Dendritic cell treated with granulocyte-macrophage colony-stimulating factor and Interleukin-4, amounts not matched to agents 40 ng/mL and 50 ng/mL, for 4 days (primary cell): ENCODE measurements at regions of chr10 and their contacts with region 1.

Region 1: DNA sequence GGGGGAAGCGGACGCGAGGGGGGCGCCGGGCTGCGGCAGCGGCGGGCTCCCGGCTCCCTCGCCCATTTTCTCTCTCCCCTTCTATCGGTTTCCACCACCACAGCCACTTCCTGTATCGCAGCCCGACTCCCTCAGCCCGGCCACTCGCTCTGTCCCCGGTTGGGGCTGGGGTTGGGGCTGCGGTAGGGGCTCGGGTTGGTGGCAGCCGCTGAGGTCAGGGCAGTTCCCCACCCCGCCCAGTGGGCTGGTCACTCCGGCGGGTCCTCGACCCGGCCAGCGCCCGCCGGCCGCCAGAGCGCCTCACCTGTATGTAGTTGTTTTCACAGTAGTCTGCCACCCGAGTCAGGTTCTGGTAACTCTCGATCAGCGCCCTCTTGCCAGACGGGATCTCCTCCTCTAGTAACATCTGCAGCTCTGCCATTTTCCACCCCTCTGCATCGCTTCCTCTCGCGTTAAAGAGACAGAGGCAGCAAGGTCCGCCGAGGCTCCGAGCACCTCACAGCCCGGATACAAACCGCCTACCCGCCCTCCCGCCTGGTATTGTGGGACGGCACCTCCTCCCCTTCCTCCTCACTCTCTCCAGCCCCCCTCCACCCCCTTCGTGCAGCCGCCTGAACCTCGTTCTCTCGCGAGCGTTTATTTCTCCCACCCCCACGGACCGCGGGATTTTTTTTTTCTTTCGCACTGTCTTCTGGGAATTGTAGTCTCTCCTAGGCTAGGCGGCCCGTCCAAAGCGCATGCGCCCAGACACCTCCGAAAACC is at the start of gene ABI1:
- H3K4me3 Mint-ChIP-seq: peak within 1 kb of the TSS; percentile 97
- H3K27ac Mint-ChIP-seq: peak within 1 kb of the TSS; percentile 96
- H3K4me1 Mint-ChIP-seq: peaks cover 41% of the 10 kb centered on the region
- H3K27me3 Mint-ChIP-seq: no peaks in the 10 kb centered on the region

Region 2: GRCh38 chr10:26737730-26738129 is 122.9 kb before region 1 on chr10:
- intact Hi-C with region 1: loop called (anchors 1 kb)
- H3K4me3 Mint-ChIP-seq: no peak overlapping the region
- H3K27ac Mint-ChIP-seq: peak overlapping the region; percentile 89
- H3K4me1 Mint-ChIP-seq: peaks cover 42% of the 10 kb centered on the region
- H3K27me3 Mint-ChIP-seq: no peaks in the 10 kb centered on the region

Region 3: GRCh38 chr10:26776258-26776657 is 84.4 kb before region 1 on chr10:
- intact Hi-C with region 1: no loop called
- H3K4me3 Mint-ChIP-seq: no peak overlapping the region
- H3K27ac Mint-ChIP-seq: no peak overlapping the region
- H3K4me1 Mint-ChIP-seq: peaks cover 34% of the 10 kb centered on the region
- H3K27me3 Mint-ChIP-seq: no peaks in the 10 kb centered on the region

Region 4: GRCh38 chr10:26799342-26799741 is 61.3 kb before region 1 on chr10:
- intact Hi-C with region 1: loop called (anchors 10 kb)
- H3K4me3 Mint-ChIP-seq: no peak overlapping the region
- H3K27ac Mint-ChIP-seq: no peak overlapping the region
- H3K4me1 Mint-ChIP-seq: peaks cover 46% of the 10 kb centered on the region
- H3K27me3 Mint-ChIP-seq: no peaks in the 10 kb centered on the region

Region 5: DNA sequence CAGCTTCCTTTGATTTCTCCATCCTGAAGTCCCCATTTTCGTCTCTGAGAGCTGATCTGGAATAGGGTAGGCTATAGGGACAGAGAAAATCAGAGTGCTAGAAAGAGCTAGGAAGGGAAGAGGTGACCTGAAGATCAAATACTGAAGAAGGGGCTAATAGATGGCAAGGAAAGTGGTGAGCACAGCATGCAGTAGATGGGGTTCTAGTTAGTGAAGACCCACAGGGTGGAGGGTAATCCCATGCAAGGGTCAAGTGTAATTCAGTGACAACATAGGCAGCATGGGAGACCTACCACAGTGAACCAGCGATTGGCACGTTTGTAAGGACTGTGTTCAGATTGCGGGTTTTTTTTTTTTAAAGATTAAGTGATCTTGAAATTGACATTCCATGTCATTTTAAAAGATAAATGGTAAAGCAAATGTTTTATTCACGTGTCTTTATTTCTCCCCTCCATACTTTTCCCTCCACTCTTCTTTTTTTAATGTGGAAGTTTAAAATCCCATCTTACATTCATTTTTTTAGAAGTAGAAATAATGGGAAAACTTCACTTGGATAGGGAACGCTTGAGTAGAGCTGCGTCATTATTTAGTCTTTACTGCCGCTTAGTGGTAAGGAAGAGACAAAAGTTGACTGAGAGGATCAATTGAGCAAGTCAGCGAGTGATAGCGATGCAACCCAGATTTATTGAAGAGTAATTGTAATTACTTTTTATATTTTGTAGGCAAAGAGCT is 21.1 kb after region 1 on chr10:
- intact Hi-C with region 1: loop called (anchors 2 kb)
- H3K4me3 Mint-ChIP-seq: no peak overlapping the region
- H3K27ac Mint-ChIP-seq: no peak overlapping the region
- H3K4me1 Mint-ChIP-seq: peaks cover 5% of the 10 kb centered on the region
- H3K27me3 Mint-ChIP-seq: peaks cover 12% of the 10 kb centered on the region

Region 6: GRCh38 chr10:26911811-26912461 is 51.3 kb after region 1 on chr10:
- intact Hi-C with region 1: no loop called
- H3K4me3 Mint-ChIP-seq: no peak overlapping the region
- H3K27ac Mint-ChIP-seq: no peak overlapping the region
- H3K4me1 Mint-ChIP-seq: peaks cover 9% of the 10 kb centered on the region
- H3K27me3 Mint-ChIP-seq: peaks cover 25% of the 10 kb centered on the region

Region 7: DNA sequence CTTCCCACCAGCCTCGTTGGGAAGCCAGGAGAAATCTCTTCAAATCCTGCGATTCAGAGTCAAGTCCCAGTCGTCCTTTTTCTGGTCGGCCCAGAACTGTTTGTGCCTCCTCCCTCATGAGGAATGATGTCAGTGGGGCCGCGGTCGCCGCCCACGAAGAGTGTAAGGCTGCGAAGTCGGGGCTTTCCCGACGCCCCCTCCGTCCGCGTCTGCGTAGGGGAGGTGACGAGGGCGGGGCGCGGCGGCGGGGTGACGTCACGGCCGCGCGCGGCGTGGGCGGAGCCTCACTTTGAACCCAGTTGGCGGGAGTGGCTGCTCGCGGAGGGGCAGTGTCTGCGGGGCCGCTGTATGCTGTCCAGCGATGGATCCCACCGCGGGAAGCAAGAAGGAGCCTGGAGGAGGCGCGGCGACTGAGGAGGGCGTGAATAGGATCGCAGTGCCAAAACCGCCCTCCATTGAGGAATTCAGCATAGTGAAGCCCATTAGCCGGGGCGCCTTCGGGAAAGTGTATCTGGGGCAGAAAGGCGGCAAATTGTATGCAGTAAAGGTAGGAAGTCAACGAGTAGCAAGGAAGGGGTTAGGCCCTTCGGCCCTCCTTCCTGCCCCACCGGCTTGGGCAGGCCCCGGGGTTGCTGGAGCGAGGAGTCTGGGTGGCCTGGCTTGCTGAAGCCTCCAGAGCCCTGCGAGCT is 294.6 kb after region 1 on chr10 and contains the start of gene MASTL:
- intact Hi-C with region 1: loop called (anchors 2 kb)
- H3K4me3 Mint-ChIP-seq: peak within 1 kb of the TSS; percentile 89
- H3K27ac Mint-ChIP-seq: peak within 1 kb of the TSS; percentile 95
- H3K4me1 Mint-ChIP-seq: peaks cover 48% of the 10 kb centered on the region
- H3K27me3 Mint-ChIP-seq: no peaks in the 10 kb centered on the region